Right lobe of liver (tissue), 6 donors: ENCODE measurements at regions of chr13 and their contacts with region 1.

Region 1: GRCh38 chr13:113029487-113030258 is 60.7 kb downstream of the MCF2L start:
- DNase-seq: peak in 1 of 3 donors; percentile 46
- ATAC-seq: peak; percentile 67 to 80 (median 74)
- H3K4me3 ChIP-seq: no peak overlapping the region
- H3K27ac ChIP-seq: no peak overlapping the region
- H3K4me1 ChIP-seq: no peaks in the 10 kb centered on the region
- H3K27me3 ChIP-seq: no peaks in the 10 kb centered on the region
- CTCF ChIP-seq: peak; percentile 87 to 93 (median 90)
- POLR2A ChIP-seq: no peak

Region 2: DNA sequence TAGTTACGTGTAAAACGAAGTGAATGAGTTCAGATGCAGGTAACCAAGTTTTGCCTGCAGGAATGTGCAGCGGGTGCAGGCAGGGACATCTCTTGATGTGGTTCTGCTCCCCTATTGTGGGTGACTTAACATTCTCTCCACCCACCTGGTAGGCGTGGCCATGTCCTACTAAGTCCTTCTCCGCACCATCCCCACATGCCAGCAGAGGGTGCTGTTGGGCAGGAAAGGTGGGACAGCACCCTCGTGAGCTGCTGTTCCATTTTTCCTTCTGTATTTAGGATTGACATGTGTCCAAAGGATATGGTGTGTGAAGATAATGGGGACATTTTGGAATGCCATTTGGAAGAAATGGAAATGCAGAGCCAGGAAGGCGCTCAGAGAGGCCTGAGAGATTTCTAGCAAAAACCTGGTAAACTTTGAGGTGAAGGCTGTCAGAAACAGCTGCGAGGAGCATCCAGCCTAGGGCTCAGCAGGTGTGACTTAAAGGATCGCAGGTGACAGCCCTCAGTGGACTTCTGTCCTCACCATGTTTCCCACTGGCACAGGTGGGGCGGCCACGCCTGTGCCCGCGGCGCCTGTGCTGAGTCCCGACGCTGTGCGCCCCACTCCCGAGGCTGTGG is 86.9 kb before region 1 on chr13:
- intact Hi-C with region 1: loop called (anchors 5 kb)
- DNase-seq: peak; percentile 95 to 97 (median 97)
- ATAC-seq: peak; percentile 96 to 98 (median 98)
- H3K4me3 ChIP-seq: peak overlapping the region; percentile 37 to 65 (median 62)
- H3K27ac ChIP-seq: peak overlapping the region; percentile 53 to 70 (median 70)
- H3K4me1 ChIP-seq: peaks cover 0 to 4% (median 0%) of the 10 kb centered on the region in 4 donors
- H3K27me3 ChIP-seq: no peaks in the 10 kb centered on the region
- CTCF ChIP-seq: peak; percentile 94 to 99 (median 98)
- POLR2A ChIP-seq: no peak

Region 3: GRCh38 chr13:113162771-113163685 is 133.4 kb after region 1 on chr13:
- intact Hi-C with region 1: no loop called
- DNase-seq: no peak
- ATAC-seq: no peak
- H3K4me3 ChIP-seq: no peak overlapping the region
- H3K27ac ChIP-seq: no peak overlapping the region
- H3K4me1 ChIP-seq: peaks cover 0 to 6% (median 0%) of the 10 kb centered on the region in 4 donors
- H3K27me3 ChIP-seq: no peaks in the 10 kb centered on the region
- CTCF ChIP-seq: no peak
- POLR2A ChIP-seq: no peak